ENCODE measurements at regions of chr2 and their contacts with region 1.

Region 1: GRCh38 chr2:42328148-42328833 is 32.7 kb downstream of the COX7A2L start:
- DNase-seq: no peak
- ATAC-seq: no peak
- H3K4me3 Mint-ChIP-seq: no peak overlapping the region
- H3K27ac Mint-ChIP-seq: peak overlapping the region; percentile 28
- H3K4me1 Mint-ChIP-seq: peaks cover 13% of the 10 kb centered on the region
- H3K27me3 Mint-ChIP-seq: no peaks in the 10 kb centered on the region
- CTCF ChIP-seq: peak; percentile 67

Region 2: GRCh38 chr2:42345986-42346385 is 17.7 kb after region 1 on chr2:
- CTCF ChIA-PET with region 1: interaction called, 13 read pairs
- POLR2A ChIA-PET with region 1: no interaction called
- intact Hi-C with region 1: no loop called
- DNase-seq: no peak
- ATAC-seq: no peak
- H3K4me3 Mint-ChIP-seq: no peak overlapping the region
- H3K27ac Mint-ChIP-seq: no peak overlapping the region
- H3K4me1 Mint-ChIP-seq: peaks cover 26% of the 10 kb centered on the region
- H3K27me3 Mint-ChIP-seq: no peaks in the 10 kb centered on the region
- CTCF ChIP-seq: no peak

Region 3: DNA sequence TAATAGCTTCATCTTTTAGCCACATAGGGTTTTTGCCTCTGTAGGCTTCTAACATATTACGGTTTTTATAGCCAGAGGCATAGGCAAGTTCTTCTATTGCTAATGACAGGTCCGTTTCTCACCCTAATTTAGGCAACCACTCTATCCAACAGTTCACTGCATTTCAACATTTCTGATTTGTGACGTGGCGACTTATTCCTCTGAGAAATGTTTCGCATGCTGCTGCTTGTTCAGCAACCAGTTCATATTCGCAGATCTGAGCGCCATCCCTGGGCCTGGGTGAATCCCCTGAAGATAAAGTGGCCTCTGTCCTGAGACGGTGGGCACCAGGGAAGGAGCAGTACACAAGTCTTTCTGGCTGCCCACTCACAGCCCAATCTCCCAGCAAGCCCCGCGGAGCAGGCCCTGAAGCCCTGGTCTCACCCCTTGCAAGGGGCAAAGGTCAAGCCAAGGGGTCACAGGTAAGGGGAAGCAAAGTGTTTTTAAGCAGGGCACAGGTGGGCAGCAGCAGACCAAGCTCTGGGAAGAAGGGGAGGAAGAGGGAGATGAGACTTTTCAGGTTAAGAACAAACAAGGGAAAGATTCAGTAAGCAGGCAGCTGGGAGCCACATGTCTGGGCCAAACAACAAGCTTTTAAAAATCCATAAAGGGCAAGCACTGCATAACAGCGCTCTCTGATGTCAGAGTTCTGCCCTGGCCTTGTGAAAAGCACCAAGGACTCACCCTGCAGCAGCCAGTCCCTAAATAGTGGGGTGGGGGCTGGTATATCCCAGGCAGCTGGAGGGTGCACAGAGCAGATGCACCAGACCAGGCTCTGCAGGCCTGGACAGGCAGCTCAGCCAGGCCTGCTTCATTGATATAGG is 43.6 kb after region 1 on chr2:
- CTCF ChIA-PET with region 1: no interaction called
- POLR2A ChIA-PET with region 1: no interaction called
- intact Hi-C with region 1: no loop called
- DNase-seq: no peak
- ATAC-seq: no peak
- H3K4me3 Mint-ChIP-seq: no peak overlapping the region
- H3K27ac Mint-ChIP-seq: no peak overlapping the region
- H3K4me1 Mint-ChIP-seq: peaks cover 5% of the 10 kb centered on the region
- H3K27me3 Mint-ChIP-seq: no peaks in the 10 kb centered on the region
- CTCF ChIP-seq: no peak